Right lobe of liver (tissue), 6 donors: ENCODE measurements at regions of chr7 and their contacts with region 1.

Region 1: DNA sequence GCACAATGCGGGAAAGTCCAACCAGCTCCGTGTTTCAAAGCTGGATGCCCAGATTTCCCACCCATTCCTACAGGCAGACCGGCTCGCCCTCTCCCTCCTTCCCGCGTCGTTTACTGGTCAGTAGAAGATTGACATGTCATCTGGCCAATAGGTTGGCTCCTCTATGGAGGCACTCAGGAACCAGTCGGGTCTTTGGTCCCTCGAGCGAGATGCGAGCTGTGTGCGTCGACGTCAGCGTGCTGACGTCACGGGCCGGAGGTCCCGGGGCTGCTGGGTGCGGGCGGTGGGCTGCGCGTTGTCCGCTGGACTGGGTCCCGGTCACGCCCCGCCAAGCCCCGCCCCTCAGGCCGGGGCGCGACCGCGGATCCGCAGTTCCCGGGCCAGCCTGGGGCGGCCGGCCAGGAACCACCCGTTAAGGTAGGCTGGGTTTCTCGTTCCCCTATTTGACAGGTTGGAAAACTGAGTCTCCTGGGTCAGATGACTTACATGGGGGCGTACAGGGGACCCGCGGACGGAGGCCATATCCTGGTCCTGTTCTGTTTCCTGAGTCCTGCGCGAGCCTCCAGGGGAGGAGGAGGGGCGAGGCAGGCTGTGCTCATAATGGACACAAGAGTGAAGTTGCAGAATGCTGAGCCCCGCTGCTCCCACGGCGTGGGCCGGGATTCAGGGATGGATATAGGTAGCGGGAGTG is at the start of gene STARD3NL:
- DNase-seq: peak; percentile 94 to 98 (median 97)
- ATAC-seq: peak; percentile 96 to 99 (median 98)
- H3K4me3 ChIP-seq: peak within 1 kb of the TSS; percentile 79 to 83 (median 81)
- H3K27ac ChIP-seq: peak within 1 kb of the TSS; percentile 78 to 92 (median 78)
- H3K4me1 ChIP-seq: no peaks in the 10 kb centered on the region
- H3K27me3 ChIP-seq: no peaks in the 10 kb centered on the region
- CTCF ChIP-seq: peak in 1 of 4 donors; percentile 39
- POLR2A ChIP-seq: peak; percentile 62
- total RNA-seq, gene STARD3NL: 5.8 to 14.3 (median 9.6) TPM

Region 2: GRCh38 chr7:38215735-38216670 is 37.9 kb after region 1 on chr7:
- intact Hi-C with region 1: loop called in 1 of 2 experiments (anchors 5 kb)
- DNase-seq: peak; percentile 67 to 75 (median 71)
- ATAC-seq: peak; percentile 90 to 96 (median 94)
- H3K4me3 ChIP-seq: no peak overlapping the region
- H3K27ac ChIP-seq: no peak overlapping the region
- H3K4me1 ChIP-seq: peaks cover 0 to 7% (median 4%) of the 10 kb centered on the region in 4 donors
- H3K27me3 ChIP-seq: no peaks in the 10 kb centered on the region
- CTCF ChIP-seq: peak; percentile 72 to 91 (median 89)
- POLR2A ChIP-seq: no peak